Thyroid gland (tissue), 4 donors: ENCODE measurements at regions of chr19 and their contacts with region 1.

Region 1: GRCh38 chr19:1605236-1606137 is at the start of gene UQCR11:
- DNase-seq: peak; percentile 95 to 96
- H3K4me3 ChIP-seq: peak within 1 kb of the TSS; percentile 84 to 97 (median 93)
- H3K27ac ChIP-seq: peak within 1 kb of the TSS; percentile 34 to 83 (median 83)
- H3K4me1 ChIP-seq: peaks cover 17 to 30% of the 10 kb centered on the region in 2 donors
- H3K27me3 ChIP-seq: no peaks in the 10 kb centered on the region
- CTCF ChIP-seq: peak in 4 of 6 experiments; percentile 54 to 76 (median 69)
- POLR2A ChIP-seq: peak in 1 of 2 donors; percentile 76
- total RNA-seq, gene UQCR11: 52.0 to 154 (median 61.9) TPM

Region 2: DNA sequence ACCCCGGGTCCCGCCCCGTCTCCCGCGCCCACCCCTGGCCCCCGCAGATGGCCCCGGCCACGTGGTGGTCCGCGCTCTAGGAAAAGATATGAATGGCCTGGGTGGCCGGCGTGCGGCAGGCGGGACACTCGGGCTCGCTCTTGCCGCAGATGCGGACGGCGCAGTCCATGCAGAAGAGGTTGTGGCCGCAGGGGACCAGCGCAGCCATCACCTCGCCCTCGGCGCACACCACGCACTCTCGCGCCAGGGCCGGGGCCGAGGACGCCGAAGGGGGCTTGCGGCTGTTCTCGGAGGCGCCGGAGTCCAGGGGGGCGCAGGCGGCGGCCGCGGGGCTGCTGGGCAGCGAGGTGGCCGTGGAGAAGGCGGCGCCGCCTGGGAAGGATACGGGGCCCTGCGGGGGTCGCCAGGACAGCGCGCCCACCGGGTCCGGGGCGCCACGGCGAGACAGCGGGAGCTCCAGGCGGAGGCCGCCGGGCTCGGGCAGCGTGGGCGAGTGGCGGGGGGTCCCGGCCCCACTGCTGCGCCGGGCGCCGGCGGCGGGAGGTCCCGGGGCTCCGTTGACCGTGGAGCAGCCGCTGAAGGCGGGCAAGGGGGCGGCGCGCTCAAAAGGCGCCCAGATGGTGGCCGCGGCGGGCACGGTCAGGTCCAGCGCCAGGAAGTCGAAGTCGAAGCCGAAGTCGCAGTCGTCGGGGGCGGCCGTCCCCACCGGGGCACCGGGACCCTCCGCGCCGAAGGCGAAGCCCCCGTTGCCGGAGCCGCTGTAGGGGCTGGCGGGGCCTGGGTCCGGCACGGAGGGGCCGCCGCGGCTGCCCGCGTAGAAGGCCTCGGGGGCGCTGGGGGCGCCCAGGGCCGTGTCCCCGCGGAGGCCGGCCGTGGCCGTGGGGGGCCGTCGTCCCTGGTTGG is 49.7 kb before region 1 on chr19:
- intact Hi-C with region 1: no loop called
- DNase-seq: no peak
- H3K4me3 ChIP-seq: no peak overlapping the region
- H3K27ac ChIP-seq: no peak overlapping the region
- H3K4me1 ChIP-seq: no peaks in the 10 kb centered on the region
- H3K27me3 ChIP-seq: no peaks in the 10 kb centered on the region
- CTCF ChIP-seq: no peak
- POLR2A ChIP-seq: no peak

Region 3: DNA sequence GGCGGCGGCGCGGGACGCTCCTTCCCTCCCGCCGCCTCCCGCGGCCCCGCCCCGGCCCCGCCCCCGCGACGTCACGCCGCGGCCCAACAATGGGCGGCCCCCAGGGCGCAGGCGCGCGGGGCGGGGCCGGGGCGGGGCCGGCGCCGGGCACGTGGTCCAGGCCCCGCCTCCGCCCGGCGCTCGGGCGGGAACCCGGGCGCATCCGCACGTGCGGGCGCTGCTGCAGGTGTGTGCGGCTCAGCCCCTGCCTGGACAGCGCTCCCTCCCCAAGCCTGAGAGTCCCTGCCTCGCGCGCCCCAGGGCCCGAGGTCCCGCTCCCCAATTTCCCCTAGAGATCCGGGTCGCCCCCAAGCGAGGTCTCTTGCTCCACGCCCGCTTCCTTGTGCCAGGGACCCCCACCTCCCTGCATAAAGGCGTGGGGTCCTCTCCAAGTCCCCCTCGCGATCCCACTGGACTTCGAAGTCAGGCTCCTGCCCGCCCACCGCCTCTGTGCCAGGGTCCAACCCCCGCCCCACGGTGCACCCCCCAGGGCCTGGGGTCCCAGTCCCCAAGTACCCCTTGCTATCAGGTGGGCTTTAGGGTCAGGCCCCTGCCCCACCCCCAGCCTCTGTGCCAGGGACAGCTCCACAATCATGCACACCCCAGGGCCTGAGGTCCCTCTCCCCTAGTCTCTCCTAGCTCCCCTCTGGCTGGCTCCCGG is 37.0 kb before region 1 on chr19 and contains the start of gene MEX3D:
- intact Hi-C with region 1: loop called (anchors 5 kb)
- DNase-seq: peak; percentile 74 to 78
- H3K4me3 ChIP-seq: peak within 1 kb of the TSS; percentile 71 to 96 (median 83)
- H3K27ac ChIP-seq: peak within 1 kb of the TSS; percentile 46 to 82 (median 47)
- H3K4me1 ChIP-seq: peaks cover 12 to 13% of the 10 kb centered on the region in 2 donors
- H3K27me3 ChIP-seq: no peaks in the 10 kb centered on the region
- CTCF ChIP-seq: no peak
- POLR2A ChIP-seq: peak in 1 of 2 donors; percentile 38
- total RNA-seq, gene MEX3D: 18.4 to 31.8 (median 26.4) TPM

Region 4: GRCh38 chr19:1651568-1652291 is 46.2 kb after region 1 on chr19:
- intact Hi-C with region 1: loop called (anchors 2 kb)
- DNase-seq: peak; percentile 49 to 55
- H3K4me3 ChIP-seq: peak overlapping the region; percentile 39 to 92 (median 73)
- H3K27ac ChIP-seq: peak overlapping the region in 2 of 3 donors; percentile 45 to 49
- H3K4me1 ChIP-seq: peaks cover 30 to 37% of the 10 kb centered on the region in 2 donors
- H3K27me3 ChIP-seq: no peaks in the 10 kb centered on the region
- CTCF ChIP-seq: no peak
- POLR2A ChIP-seq: no peak

Region 5: DNA sequence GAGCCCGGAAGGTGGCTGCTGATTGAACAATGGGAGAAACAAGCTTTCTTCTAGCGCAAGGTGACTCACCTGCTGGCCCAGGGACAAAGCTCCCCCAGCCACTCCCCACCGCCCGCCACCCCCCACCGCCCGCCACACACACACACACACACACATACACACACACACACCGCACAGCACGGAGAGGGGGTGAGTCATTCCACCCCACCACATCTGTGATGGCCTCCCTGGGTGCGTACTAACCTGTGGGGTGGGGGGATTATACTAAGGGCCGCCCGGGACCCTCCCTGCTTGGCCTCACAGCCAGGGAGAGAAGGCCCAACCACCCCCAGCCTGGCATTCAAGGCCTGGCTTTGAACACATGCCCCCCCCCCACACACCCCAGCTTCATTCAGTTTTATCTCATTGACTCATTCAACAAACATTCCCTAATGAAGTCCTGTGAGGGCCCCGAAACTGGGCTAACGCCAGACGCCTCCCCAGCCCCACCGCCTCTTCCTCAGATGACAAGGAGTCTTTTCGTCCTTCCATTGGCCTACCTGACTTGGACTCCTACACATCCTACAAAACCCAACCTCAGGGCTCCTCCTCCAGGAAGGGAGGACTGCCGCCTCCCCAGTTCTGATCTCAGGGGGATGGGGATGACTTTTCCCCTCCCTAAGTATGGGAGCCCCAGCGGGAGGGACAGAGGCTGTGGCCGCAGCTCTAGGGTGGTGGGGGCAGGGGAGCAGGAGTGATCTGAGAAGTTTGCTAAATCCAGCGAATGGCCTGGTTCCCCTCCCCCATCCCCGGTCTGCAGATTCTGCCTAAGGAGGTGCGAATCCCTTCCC is 142.0 kb after region 1 on chr19:
- intact Hi-C with region 1: no loop called
- DNase-seq: no peak
- H3K4me3 ChIP-seq: no peak overlapping the region
- H3K27ac ChIP-seq: no peak overlapping the region
- H3K4me1 ChIP-seq: peaks cover 9 to 40% of the 10 kb centered on the region in 2 donors
- H3K27me3 ChIP-seq: peaks cover 43% of the 10 kb centered on the region
- CTCF ChIP-seq: no peak
- POLR2A ChIP-seq: no peak